GM12878 (cell line): ENCODE measurements at regions of chrX and their contacts with region 1.

Region 1: DNA sequence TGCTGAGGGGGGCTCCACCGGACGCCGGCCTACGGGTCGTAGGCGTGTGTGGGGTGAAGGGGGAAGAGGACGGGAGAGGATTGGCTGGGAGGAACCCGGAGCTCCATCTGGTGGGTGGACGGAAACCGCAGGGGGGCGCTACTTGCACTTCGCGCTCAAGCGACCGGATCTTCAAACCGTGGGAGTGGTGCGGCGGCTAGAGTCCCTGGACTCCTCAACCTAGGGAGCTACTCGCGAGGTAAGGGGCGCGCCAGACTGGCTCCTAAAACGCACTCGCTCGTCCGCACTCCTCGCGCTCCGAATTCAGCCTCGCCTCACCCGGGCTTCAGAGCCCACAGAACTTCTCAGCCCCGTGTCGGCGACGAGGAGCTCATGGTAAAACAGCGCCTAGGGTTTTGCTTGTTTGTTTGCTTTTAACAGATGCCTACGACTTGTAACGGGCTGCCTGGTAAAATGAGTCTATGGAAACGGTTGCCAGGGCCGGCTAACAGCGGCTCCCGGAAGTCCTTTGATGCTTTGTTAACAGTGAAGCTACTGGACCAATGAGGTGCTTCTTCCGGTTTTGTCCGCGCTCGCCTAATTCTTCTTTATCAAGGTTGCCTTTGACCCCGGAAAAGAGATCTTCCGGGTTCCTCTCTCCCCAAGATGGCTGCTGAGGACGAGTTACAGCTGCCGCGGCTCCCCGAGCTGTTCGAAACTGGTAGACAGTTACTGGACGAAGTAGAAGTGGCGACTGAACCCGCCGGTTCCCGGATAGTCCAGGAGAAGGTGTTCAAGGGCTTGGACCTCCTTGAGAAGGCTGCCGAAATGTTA is at the start of gene IGBP1:
- DNase-seq: peak; percentile 49
- ATAC-seq: peak; percentile 91
- H3K4me3 ChIP-seq: peak within 1 kb of the TSS; percentile 76
- H3K27ac ChIP-seq: peak within 1 kb of the TSS; percentile 83
- H3K4me1 ChIP-seq: no peaks in the 10 kb centered on the region
- H3K27me3 ChIP-seq: no peaks in the 10 kb centered on the region
- CTCF ChIP-seq: peak; percentile 35 to 53 (median 44); a peak in 5 of 6 replicates
- EP300 ChIP-seq: no peak
- POLR2A ChIP-seq: peak; percentile 82
- RAD21 ChIP-seq: no peak
- polyA plus RNA-seq, gene IGBP1: 75.8 to 99.3 TPM

Region 2: DNA sequence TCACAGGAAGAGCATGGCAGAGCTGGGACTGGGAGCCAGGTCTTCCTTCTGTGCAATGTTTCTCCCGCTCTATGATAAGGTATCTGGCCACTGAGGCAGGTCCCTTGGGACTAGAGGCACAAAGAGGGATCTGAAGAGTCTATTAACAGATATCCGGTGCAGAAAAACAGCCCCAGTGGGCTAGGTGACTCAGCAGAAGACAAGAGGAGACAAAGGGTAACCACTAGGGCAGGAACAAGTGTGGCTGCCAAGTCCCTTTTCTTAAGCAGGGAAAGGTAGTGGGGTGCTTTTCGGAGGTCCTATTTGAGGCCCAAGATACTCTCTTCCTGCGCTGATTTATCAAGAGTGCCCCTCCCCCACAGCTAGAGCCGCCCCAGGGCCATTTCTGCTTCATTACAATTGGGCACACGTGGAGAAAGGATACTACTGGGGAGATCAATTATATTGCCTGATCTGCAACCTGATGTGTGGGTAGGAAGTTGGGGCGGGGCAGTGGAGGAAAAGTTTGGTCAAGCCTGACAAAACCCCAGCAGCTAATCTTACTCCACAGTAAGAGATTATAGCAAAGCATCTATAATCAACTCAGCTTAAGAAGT is 43.5 kb after region 1 on chrX and contains the start of gene DGAT2L6:
- CTCF ChIA-PET with region 1: interaction called, 12 read pairs
- POLR2A ChIA-PET with region 1: interaction called, 5 read pairs
- RAD21 ChIA-PET with region 1: interaction called, 11 read pairs
- SMC1A ChIA-PET with region 1: interaction called, 7 read pairs
- in situ Hi-C with region 1: no loop called
- intact Hi-C with region 1: loop called (anchors 2 kb)
- DNase-seq: peak; percentile 53
- ATAC-seq: peak; percentile 80
- H3K4me3 ChIP-seq: no peak within 1 kb of the TSS
- H3K27ac ChIP-seq: peak within 1 kb of the TSS; percentile 59
- H3K4me1 ChIP-seq: peaks cover 18% of the 10 kb centered on the region
- H3K27me3 ChIP-seq: no peaks in the 10 kb centered on the region
- CTCF ChIP-seq: no peak
- EP300 ChIP-seq: peak in 1 of 2 experiments; percentile 1; a peak in 1 of 4 replicates
- POLR2A ChIP-seq: no peak
- RAD21 ChIP-seq: no peak
- polyA plus RNA-seq, gene DGAT2L6: 0.11 to 0.23 TPM

Region 3: GRCh38 chrX:70262952-70263567 is 129.6 kb after region 1 on chrX:
- CTCF ChIA-PET with region 1: interaction called, 15 read pairs
- POLR2A ChIA-PET with region 1: no interaction called
- RAD21 ChIA-PET with region 1: interaction called, 9 read pairs
- SMC1A ChIA-PET with region 1: interaction called, 5 read pairs
- in situ Hi-C with region 1: no loop called
- intact Hi-C with region 1: no loop called
- DNase-seq: no peak
- ATAC-seq: peak; percentile 95
- H3K4me3 ChIP-seq: no peak overlapping the region
- H3K27ac ChIP-seq: no peak overlapping the region
- H3K4me1 ChIP-seq: no peaks in the 10 kb centered on the region
- H3K27me3 ChIP-seq: no peaks in the 10 kb centered on the region
- CTCF ChIP-seq: peak; percentile 46 to 73 (median 65)
- EP300 ChIP-seq: no peak
- POLR2A ChIP-seq: no peak
- RAD21 ChIP-seq: peak; percentile 49

Region 4: GRCh38 chrX:70289793-70290776 is 156.6 kb after region 1 on chrX and contains the starts of genes KIF4A and PDZD11:
- CTCF ChIA-PET with region 1: interaction called, 10 read pairs
- POLR2A ChIA-PET with region 1: interaction called, 6 read pairs
- RAD21 ChIA-PET with region 1: interaction called, 7 read pairs
- SMC1A ChIA-PET with region 1: interaction called, 3 read pairs
- in situ Hi-C with region 1: no loop called
- intact Hi-C with region 1: no loop called
- DNase-seq: peak; percentile 54
- ATAC-seq: peak; percentile 99
- H3K4me3 ChIP-seq: peak within 1 kb of the TSS; percentile 69
- H3K27ac ChIP-seq: peak within 1 kb of the TSS; percentile 71
- H3K4me1 ChIP-seq: no peaks in the 10 kb centered on the region
- H3K27me3 ChIP-seq: no peaks in the 10 kb centered on the region
- CTCF ChIP-seq: no peak
- EP300 ChIP-seq: no peak
- POLR2A ChIP-seq: peak; percentile 91
- RAD21 ChIP-seq: no peak
- polyA plus RNA-seq, gene KIF4A: 10.8 to 11.5 TPM
- polyA plus RNA-seq, gene PDZD11: 76.0 to 123 TPM